ENCODE measurements at regions of chr1 and their contacts with region 1.

Region 1: DNA sequence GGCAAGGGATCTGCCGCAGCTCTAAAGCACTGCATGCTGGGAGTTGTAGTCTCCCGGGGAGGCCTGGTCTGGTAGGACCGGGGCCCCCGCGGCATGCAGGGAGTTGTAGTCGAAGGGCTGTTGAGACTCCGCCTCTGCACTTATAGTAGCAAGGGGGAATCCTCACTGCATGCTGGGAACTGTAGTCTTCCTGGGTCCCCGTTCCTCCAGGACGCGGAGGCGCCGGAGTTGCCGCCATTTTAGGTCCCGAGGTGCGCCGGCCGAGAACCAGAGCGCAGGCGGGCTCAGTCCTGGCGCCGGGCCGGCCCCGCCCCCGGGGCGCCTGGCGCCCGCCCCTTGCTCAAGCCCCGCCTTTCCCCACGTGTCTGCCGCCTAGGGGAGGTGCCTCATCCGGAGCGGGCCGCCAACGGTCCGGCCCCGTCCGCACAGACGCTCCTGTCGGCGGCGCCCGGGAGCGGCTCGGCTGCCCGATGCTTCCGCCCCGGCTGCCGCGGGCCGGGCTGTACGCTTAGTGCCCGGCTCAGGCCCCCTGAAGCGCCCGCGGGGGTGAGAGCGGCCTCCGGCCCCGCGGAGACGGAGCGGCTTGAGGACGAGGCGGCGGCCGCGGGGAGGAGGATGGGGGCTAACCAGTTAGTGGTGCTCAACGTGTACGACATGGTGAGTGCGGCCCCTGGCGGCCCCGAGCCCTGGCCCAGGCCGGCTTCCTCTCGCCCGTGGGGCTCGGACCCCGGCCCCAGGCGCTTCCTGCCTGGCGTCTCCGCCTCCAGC is at the start of gene DESI2:
- DNase-seq: peak; percentile 98
- H3K4me3 Mint-ChIP-seq: peak within 1 kb of the TSS; percentile 83
- H3K27ac Mint-ChIP-seq: peak within 1 kb of the TSS; percentile 75
- H3K4me1 Mint-ChIP-seq: peaks cover 18% of the 10 kb centered on the region
- H3K27me3 Mint-ChIP-seq: no peaks in the 10 kb centered on the region
- total RNA-seq, gene DESI2: 31.1 and 32.8 TPM in 2 replicates

Region 2: DNA sequence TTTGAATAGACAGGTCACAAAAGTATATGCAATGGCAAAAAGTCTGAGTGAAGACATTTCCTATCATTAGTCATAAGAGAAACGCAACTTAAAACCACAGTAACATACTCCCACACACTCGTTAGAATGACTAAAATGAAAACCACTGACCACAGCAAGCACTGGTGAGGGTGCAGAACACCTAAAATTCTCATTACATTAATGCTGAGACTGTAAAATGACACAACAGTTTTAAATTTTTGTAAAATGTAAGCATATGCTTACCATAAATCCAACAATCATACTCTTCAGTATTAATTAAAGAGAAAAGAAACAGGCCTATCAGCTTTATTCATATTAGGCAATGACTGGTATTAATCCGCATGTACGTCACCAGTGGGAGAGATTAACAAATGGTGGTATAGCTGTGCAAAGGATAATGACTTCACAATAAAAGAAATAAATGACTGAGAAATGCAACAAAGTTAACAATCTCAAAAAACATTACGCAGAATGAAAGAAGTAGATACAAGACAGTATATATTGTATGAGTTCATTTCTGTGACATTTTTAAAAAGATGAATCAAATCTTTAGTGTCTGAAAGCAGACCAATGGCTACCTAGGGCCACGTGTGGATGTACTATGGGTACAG is 1056.3 kb before region 1 on chr1:
- intact Hi-C with region 1: loop called (anchors 10 kb)
- DNase-seq: peak; percentile 32
- H3K4me3 Mint-ChIP-seq: peak overlapping the region; percentile 75
- H3K27ac Mint-ChIP-seq: peak overlapping the region; percentile 94
- H3K4me1 Mint-ChIP-seq: peaks cover 32% of the 10 kb centered on the region
- H3K27me3 Mint-ChIP-seq: no peaks in the 10 kb centered on the region

Region 3: DNA sequence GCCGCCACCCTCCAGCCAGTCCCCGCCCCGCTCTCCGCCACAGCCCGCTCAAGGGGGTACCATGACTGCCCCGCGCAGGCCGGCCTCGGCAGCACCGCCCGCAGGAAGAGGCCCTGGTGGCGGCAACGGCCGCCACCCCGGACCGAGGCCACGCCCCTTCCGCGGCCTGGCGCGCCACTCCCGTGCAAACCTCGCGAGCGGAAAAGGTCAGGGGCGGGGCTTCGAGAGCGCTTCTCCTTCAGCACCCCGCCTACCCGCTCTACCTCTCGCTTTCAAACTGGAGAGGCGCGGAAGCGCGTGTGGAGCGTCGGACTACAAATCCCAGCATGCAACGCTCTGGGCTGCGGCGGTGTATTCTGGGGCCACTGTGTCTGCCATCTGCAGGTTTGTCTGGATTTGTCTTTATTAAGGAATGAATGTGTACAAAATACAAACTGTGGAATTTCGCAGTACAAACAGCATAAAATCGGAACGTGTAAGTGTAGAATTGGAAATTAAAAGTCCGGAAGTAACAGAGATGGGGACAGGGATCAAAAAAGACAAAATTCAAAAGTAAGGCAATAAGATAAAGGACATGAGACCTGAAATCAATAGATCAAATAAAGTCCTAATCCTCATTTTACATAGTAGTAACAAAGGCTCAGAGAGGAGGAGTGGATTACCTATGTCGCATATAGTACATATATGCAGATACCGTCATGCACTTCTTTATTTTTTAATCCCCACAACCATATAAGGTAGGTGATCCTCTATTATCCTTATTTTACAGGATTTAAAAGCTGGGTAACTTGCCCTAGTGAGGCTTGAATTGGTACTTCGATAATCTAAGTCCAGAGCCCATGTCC is 200.7 kb before region 1 on chr1:
- intact Hi-C with region 1: loop called (anchors 1 kb)
- DNase-seq: peak; percentile 98
- H3K4me3 Mint-ChIP-seq: peak overlapping the region; percentile 95
- H3K27ac Mint-ChIP-seq: peak overlapping the region; percentile 96
- H3K4me1 Mint-ChIP-seq: peaks cover 41% of the 10 kb centered on the region
- H3K27me3 Mint-ChIP-seq: no peaks in the 10 kb centered on the region

Region 4: GRCh38 chr1:244730153-244730933 is 77.5 kb after region 1 on chr1:
- intact Hi-C with region 1: loop called (anchors 2 kb)
- DNase-seq: no peak
- H3K4me3 Mint-ChIP-seq: peak overlapping the region; percentile 85
- H3K27ac Mint-ChIP-seq: peak overlapping the region; percentile 48
- H3K4me1 Mint-ChIP-seq: peaks cover 12% of the 10 kb centered on the region
- H3K27me3 Mint-ChIP-seq: peaks cover 32% of the 10 kb centered on the region

Region 5: DNA sequence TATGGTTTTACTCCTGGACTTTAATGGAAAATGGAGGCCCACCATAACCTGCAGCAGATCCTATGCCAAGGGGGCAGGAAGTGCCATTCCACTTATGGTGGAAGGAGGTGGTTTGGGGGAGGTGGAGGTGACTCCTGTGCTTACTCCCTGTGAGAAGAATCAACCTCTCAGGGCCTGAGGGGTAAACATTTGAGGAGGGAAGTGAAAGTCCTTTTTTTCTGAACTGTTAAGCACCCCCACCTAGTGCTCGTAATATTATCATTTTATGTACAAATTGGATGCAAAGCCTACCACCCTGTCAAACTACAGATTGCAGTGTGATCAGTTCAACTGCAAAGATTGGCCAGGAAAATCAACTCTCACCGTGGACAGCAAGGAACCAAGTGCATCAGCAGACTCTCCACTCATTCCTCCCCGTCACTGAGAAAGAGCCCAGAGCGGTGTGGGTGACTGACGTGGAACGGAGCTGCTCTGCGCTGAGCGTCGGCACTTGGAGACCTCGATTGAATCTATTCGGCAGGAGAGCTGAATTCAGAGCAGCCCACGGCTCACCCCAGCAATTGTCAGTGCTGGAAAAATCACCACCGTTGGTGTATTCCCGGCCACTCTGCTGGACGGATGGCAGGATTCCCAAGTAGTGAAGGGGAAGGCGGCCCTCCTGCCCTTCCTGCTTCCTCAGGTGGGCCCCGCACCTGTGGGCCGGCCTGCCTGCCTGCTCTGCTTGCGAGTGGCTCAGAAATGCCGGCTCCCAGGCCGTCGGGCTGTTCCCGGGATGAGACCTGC is 135.8 kb after region 1 on chr1:
- intact Hi-C with region 1: no loop called
- DNase-seq: no peak
- H3K4me3 Mint-ChIP-seq: no peak overlapping the region
- H3K27ac Mint-ChIP-seq: no peak overlapping the region
- H3K4me1 Mint-ChIP-seq: no peaks in the 10 kb centered on the region
- H3K27me3 Mint-ChIP-seq: peaks cover 5% of the 10 kb centered on the region

Region 6: DNA sequence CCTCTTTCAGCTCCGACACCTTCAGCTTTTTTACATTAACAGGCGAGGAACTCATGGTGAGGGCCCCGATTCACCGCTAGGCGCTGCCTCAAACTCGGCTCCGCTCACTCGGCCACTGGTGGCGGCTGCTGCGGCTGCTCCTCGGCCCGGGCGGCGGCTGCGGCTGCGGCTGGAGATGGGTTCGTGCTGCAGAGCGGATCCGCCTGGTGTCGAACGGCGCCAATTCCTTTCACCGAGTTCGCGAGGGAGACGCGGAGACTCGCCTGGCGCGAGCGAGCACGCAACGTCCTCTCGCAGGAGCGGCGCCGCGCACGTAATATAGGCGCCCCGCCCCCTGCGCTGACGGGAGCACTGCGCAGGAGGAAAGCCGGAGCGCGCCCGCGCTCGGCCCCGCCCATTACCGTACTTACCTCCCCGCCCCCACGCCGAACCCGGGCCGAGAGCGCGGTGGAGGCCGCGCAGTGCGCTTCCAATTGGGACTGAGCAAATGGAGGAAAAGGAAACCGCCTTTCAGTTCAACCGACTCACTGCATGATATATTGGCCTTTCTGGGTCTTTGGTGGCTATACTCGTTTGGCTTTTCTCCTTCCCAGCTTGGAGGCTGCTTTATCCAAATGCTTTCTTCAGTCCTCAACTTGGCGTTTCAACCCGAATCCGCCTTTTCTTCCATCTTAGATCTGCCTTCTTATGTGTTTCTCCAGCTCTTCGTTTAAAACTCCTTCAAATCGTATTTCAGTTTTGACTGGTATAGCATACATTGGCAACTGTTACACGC is 211.6 kb after region 1 on chr1 and contains the start of gene HNRNPU:
- intact Hi-C with region 1: loop called (anchors 1 kb)
- DNase-seq: peak; percentile 97
- H3K4me3 Mint-ChIP-seq: peak within 1 kb of the TSS; percentile 87
- H3K27ac Mint-ChIP-seq: peak within 1 kb of the TSS; percentile 95
- H3K4me1 Mint-ChIP-seq: peaks cover 41% of the 10 kb centered on the region
- H3K27me3 Mint-ChIP-seq: no peaks in the 10 kb centered on the region
- total RNA-seq, gene HNRNPU: 566 and 573 TPM in 2 replicates

Region 7: GRCh38 chr1:245953876-245954660 is 1301.2 kb after region 1 on chr1:
- intact Hi-C with region 1: loop called (anchors 2 kb)
- DNase-seq: no peak
- H3K4me3 Mint-ChIP-seq: peak overlapping the region; percentile 75
- H3K27ac Mint-ChIP-seq: peak overlapping the region; percentile 88
- H3K4me1 Mint-ChIP-seq: peaks cover 26% of the 10 kb centered on the region
- H3K27me3 Mint-ChIP-seq: no peaks in the 10 kb centered on the region

Measured in activated T-helper 1 cell treated with anti-CD3 and anti-CD28 coated beads, Interleukin-12 subunit alpha, Interleukin-12 subunit beta, Interleukin-2, Interleukin-4 antibody, amounts not matched to agents 30 ng/mL and 10 ng/mL and 1 ng/mL, durations not matched to agents 14 hours and 24 hours and 36 hours (primary cell).